Calu3 (cell line): ENCODE measurements at regions of chr5 and their contacts with region 1.

Region 1: GRCh38 chr5:83712001-83712601 is 8.6 kb downstream of the HAPLN1 start:
- DNase-seq: peak; percentile 72
- H3K4me3 Mint-ChIP-seq: no peak overlapping the region
- H3K27ac Mint-ChIP-seq: no peak overlapping the region
- H3K4me1 Mint-ChIP-seq: peaks cover 9% of the 10 kb centered on the region
- H3K27me3 Mint-ChIP-seq: peaks cover 18% of the 10 kb centered on the region
- CTCF ChIP-seq: peak; percentile 69

Region 2: GRCh38 chr5:83608122-83608521 is 104.0 kb before region 1 on chr5:
- CTCF ChIA-PET with region 1: interaction called, 4 read pairs
- intact Hi-C with region 1: loop called (anchors 1 kb)
- DNase-seq: peak; percentile 56
- H3K4me3 Mint-ChIP-seq: no peak overlapping the region
- H3K27ac Mint-ChIP-seq: no peak overlapping the region
- H3K4me1 Mint-ChIP-seq: no peaks in the 10 kb centered on the region
- H3K27me3 Mint-ChIP-seq: no peaks in the 10 kb centered on the region
- CTCF ChIP-seq: peak; percentile 78

Region 3: DNA sequence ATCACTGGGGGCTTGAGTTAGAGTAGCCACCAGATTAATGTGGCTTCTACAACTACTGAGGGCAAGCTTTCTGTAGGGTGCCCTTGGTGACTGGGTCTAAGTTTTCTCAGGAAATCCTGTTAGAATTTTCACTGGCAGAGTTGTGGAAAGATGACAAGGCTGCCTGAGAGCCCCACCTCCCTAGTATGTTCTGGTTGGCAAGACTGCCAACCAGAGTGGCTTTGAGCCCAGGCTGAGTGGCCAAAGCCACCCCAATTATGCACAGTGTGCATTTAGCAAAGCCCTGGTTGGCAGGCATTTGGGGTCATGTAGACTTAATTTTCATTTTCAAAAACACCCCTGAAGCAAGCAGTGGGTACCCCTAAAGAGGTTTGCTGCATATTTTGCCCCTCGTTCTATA is 145.2 kb after region 1 on chr5:
- CTCF ChIA-PET with region 1: no interaction called
- intact Hi-C with region 1: no loop called
- DNase-seq: no peak
- H3K4me3 Mint-ChIP-seq: no peak overlapping the region
- H3K27ac Mint-ChIP-seq: no peak overlapping the region
- H3K4me1 Mint-ChIP-seq: no peaks in the 10 kb centered on the region
- H3K27me3 Mint-ChIP-seq: no peaks in the 10 kb centered on the region
- CTCF ChIP-seq: no peak